Psoas muscle (tissue), 8 donors: ENCODE measurements at regions of chr3 and their contacts with region 1.

Region 1: DNA sequence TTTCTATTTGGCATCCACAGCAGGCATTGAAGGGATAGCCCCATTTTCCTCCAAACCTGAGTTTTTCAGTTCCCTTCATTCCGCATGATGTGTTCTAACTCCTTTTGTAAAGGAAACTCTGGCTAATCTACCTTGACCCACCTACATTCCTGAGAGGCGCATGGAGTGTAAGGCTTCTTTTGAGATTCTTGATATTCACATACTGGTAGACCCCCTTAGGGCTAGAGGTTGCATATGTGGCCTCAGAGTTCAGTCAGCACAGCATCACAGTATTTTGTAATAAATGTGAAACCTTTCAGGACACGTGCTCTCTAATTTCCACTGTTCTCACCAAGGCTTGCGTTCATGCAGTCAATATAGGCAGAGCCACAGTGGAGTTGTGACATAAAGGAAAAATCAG is 212.2 kb upstream of the TBL1XR1 start:
- DNase-seq: no peak
- ATAC-seq: no peak
- H3K4me3 ChIP-seq: no peak overlapping the region
- H3K27ac ChIP-seq: no peak overlapping the region
- H3K4me1 ChIP-seq: no peaks in the 10 kb centered on the region
- H3K27me3 ChIP-seq: no peaks in the 10 kb centered on the region
- CTCF ChIP-seq: no peak

Region 2: DNA sequence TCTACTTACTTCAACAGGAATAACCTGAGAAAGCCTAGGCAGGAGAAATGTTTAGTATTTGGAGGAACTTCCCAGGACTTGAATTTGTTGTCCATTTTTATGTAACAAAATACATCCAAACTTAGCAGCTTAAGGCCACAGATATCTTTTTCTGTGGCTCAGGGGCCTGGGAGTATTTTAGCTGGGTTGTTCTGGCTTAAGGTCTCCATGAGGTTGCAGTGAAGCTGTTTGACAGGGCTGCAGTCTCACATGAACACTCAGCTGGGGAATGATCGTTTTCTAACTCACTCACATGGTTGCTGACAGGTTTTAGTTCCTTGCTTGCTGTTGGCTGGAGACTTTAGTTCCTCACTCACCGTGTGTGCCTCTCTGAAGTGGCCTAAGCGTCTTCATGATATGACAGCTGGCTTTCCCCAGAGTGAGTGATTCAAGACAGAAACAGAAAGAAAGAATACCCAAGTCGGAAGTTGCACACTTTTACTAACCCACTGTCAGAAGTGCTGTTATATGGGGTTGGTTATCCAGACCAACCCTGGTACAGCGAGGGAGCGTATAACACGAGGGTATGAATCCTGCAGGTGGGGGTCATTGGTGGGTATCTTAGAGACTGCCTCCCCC is 17.5 kb after region 1 on chr3:
- intact Hi-C with region 1: loop called in 1 of 2 experiments (anchors 2 kb)
- DNase-seq: no peak
- ATAC-seq: no peak
- H3K4me3 ChIP-seq: no peak overlapping the region
- H3K27ac ChIP-seq: no peak overlapping the region
- H3K4me1 ChIP-seq: no peaks in the 10 kb centered on the region
- H3K27me3 ChIP-seq: no peaks in the 10 kb centered on the region
- CTCF ChIP-seq: no peak

Region 3: GRCh38 chr3:177640319-177640997 is 231.0 kb after region 1 on chr3:
- intact Hi-C with region 1: no loop called
- DNase-seq: no peak
- ATAC-seq: no peak
- H3K4me3 ChIP-seq: no peak overlapping the region
- H3K27ac ChIP-seq: no peak overlapping the region
- H3K4me1 ChIP-seq: no peaks in the 10 kb centered on the region
- H3K27me3 ChIP-seq: no peaks in the 10 kb centered on the region
- CTCF ChIP-seq: no peak

Region 4: DNA sequence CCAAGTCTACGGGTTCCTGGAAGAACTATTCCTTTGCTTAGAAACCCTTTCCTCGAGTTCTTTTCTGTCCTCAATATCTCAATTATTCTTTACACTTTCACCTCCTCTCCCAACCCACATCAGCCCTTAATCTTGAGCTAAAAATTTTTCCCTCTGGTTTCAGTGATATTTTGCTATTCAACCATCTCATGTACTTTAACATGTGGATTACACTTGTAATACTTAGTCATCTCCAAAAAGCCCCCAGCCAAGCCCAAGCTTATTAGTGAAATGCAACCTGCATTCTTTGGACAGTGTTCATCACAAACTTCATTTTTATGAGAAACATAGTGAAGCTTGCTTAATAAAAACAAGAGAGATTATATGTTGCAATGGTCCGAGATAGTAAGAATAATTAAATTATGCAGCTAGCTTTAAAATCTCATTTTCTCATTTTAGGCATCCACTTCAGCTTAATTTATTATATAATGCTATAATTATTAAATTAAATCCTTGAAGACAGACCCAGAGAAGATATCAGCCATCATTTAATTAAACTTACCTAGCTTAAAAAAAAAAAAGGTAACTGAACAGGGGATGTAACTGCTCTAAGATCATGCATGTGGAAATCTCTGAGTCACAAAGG is 322.3 kb after region 1 on chr3:
- intact Hi-C with region 1: no loop called
- DNase-seq: no peak
- ATAC-seq: no peak
- H3K4me3 ChIP-seq: no peak overlapping the region
- H3K27ac ChIP-seq: no peak overlapping the region
- H3K4me1 ChIP-seq: peaks cover 9% of the 10 kb centered on the region
- H3K27me3 ChIP-seq: no peaks in the 10 kb centered on the region
- CTCF ChIP-seq: no peak